Naive thymus-derived CD4-positive, alpha-beta T cell (primary cell): ENCODE measurements at regions of chr4 and their contacts with region 1.

Region 1: DNA sequence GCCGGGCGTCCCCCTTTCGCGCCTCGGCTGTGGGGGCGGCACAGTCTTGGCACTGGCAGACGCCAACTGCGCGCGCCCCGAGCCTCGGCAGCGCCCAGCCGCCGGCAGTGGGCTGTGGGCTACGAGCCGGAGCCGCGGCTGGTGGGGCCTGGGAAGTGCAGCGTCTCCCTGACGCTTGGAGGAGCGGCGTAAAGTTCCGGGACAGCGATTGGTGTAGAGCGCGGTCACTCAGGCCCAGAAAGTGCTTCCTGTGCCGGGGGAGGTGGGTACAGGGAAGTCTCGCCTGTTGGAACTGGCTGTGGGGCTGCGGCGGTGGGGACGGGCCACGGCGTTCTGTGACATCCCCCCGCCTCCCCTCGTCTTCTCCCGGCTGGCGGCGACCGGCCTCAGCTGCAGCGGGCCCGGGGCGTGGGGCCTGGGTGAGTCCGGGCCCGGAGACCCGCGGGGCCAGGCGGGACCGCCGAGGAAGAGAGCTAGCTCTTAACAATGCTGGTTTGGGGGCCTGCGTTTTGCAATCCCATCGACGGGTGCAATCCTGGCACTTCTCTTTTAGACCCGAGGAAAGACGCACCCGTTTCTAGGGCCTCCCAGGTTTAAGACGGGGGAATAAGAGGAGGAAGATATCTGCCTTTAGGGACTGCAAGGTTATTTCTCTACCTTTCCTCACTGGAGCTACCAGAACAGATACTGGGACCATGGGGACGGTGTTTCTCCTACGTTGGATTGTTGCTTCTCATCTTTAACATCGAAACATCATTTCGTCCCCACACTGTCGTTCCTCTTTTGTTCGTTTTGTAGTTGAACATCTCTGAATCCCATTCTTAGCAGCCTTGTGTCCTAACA is at the starts of genes RWDD4 and TRAPPC11:
- DNase-seq: peak; percentile 83 to 97 (median 95)
- ATAC-seq: peak; percentile 99
- H3K4me3 ChIP-seq: peak within 1 kb of the TSS; percentile 87
- H3K4me3 Mint-ChIP-seq: peak within 1 kb of the TSS; percentile 91 to 98 (median 96)
- H3K27ac ChIP-seq: peak within 1 kb of the TSS; percentile 96
- H3K27ac Mint-ChIP-seq: peak within 1 kb of the TSS; percentile 90 to 99 (median 95)
- H3K4me1 ChIP-seq: peaks cover 14 to 19% of the 10 kb centered on the region in 2 donors
- H3K4me1 Mint-ChIP-seq: peaks cover 35 to 48% (median 38%) of the 10 kb centered on the region in 7 donors
- H3K27me3 ChIP-seq: no peaks in the 10 kb centered on the region
- H3K27me3 Mint-ChIP-seq: no peaks in the 10 kb centered on the region
- total RNA-seq, gene RWDD4: 9.3 to 15.8 (median 11.6) TPM
- total RNA-seq, gene TRAPPC11: 26.3 to 48.8 (median 35.6) TPM

Region 2: DNA sequence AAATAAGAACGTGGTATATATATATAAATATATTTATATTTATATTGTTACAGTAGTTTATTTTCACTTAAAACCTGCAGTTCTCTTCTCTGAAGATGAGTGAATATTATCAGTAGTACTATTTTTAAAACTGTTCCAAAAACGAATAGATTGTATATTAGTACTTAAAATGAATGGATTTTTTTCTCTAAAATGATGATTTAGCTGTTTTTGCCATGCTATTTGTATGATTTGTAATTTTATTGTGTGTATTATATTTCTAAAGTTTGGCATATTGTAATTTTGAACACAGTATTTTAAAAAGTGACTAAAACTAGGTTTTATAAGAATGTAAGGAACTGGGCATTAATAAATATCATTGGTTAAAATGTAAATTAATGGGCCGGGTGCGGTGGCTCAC is 21.9 kb after region 1 on chr4:
- CTCF ChIA-PET with region 1: no interaction called
- POLR2A ChIA-PET with region 1: no interaction called
- intact Hi-C with region 1: no loop called
- DNase-seq: no peak
- ATAC-seq: no peak
- H3K4me3 ChIP-seq: no peak overlapping the region
- H3K4me3 Mint-ChIP-seq: no peak overlapping the region
- H3K27ac ChIP-seq: no peak overlapping the region
- H3K27ac Mint-ChIP-seq: no peak overlapping the region
- H3K4me1 ChIP-seq: no peaks in the 10 kb centered on the region
- H3K4me1 Mint-ChIP-seq: peaks cover 0 to 6% (median 0%) of the 10 kb centered on the region in 7 donors
- H3K27me3 ChIP-seq: no peaks in the 10 kb centered on the region
- H3K27me3 Mint-ChIP-seq: no peaks in the 10 kb centered on the region

Region 3: DNA sequence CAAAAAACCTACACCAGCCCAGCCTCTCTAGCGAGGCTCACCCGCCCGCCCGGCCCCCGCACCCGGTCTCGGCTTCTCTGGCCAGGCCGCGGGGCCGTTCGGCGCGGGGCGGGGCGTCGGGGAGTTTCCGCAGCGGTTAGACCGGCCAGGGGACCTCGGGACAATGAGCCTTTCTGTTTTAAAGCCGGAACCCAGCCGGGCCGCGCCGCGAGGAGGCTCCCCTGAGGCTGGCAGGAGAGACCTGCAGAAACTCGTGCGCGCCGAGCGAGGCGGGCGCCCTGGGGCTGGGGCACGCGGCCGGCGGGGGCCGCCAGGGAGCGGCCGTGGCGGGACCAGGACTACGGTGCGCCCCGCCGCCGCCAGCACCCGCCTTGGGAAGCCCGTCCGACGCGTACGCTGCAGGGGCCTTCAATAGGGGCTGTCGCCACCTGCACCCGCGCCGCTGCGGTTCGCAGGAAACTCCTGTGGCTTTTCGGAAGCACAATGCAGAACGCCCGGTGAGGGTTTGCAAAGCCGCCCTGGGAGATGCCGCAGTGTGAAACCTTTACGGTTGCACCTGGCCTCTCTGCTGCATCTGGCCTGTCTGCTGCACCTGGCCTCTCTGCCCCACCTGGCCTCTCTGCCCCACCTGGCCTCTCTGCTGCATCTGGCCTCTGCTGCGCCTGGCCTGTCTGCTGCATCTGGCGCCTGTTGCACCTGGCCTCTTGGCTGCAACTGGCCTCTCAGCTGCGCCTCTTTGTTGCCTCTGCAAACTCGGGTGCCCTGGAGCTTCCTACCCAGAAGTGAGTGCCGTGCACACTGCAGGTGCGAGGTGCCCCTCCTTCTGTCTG is 63.7 kb after region 1 on chr4:
- CTCF ChIA-PET with region 1: no interaction called
- POLR2A ChIA-PET with region 1: interaction called, 5 read pairs
- intact Hi-C with region 1: loop called in 1 of 2 experiments (anchors 1 kb)
- DNase-seq: peak; percentile 17 to 60 (median 41)
- ATAC-seq: peak; percentile 71
- H3K4me3 ChIP-seq: peak overlapping the region; percentile 64
- H3K4me3 Mint-ChIP-seq: peak overlapping the region; percentile 65 to 96 (median 89)
- H3K27ac ChIP-seq: peak overlapping the region; percentile 21
- H3K27ac Mint-ChIP-seq: peak overlapping the region; percentile 33 to 90 (median 75)
- H3K4me1 ChIP-seq: peaks cover 5 to 9% of the 10 kb centered on the region in 2 donors
- H3K4me1 Mint-ChIP-seq: peaks cover 13 to 14% (median 13%) of the 10 kb centered on the region in 7 donors
- H3K27me3 ChIP-seq: no peaks in the 10 kb centered on the region
- H3K27me3 Mint-ChIP-seq: peaks cover 0 to 48% (median 0%) of the 10 kb centered on the region in 5 donors